T-cell (primary cell): ENCODE measurements at regions of chr19 and their contacts with region 1.

Region 1: DNA sequence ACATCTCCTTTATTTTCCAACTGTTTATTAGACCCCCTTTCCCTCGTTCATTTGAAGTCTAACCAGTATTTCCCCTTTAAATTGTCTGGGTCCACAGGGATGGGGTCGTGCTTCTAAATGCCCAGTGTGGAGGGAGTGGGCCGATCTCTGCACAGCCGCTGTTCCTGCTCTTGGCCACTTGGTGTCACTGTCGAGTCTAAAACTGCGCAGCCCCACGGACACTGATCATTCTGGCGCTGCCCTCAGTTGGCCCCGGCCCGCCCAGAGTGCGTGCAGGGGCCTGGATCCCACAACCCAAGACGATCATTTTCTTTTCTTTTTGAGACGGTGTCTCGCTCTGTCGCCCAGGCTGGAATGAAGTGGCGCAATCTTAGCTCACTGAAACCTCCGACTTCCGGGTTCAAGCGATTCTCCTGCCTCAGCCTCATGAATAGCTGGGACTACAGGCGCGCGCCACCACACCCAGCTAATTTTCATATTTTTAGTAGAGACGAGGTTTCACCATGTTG is 12.0 kb downstream of the WDR88 start:
- DNase-seq: peak in 34 of 35 experiments; percentile 4 to 82 (median 43)
- ATAC-seq: peak; percentile 94 to 99 (median 96)
- H3K4me3 ChIP-seq: no peak overlapping the region
- H3K4me3 Mint-ChIP-seq: peak overlapping the region in 2 of 3 donors; percentile 4 to 45
- H3K27ac ChIP-seq: no peak overlapping the region
- H3K27ac Mint-ChIP-seq: no peak overlapping the region
- H3K4me1 ChIP-seq: peaks cover 0 to 8% of the 10 kb centered on the region in 2 experiments
- H3K4me1 Mint-ChIP-seq: peaks cover 4 to 6% (median 4%) of the 10 kb centered on the region in 3 donors
- H3K27me3 ChIP-seq: peaks cover 0 to 19% of the 10 kb centered on the region in 2 experiments
- H3K27me3 Mint-ChIP-seq: peaks cover 0 to 12% of the 10 kb centered on the region in 2 donors

Region 2: GRCh38 chr19:33110137-33110910 is 33.6 kb before region 1 on chr19:
- CTCF ChIA-PET with region 1: no interaction called
- POLR2A ChIA-PET with region 1: no interaction called
- DNase-seq: no peak
- ATAC-seq: no peak
- H3K4me3 ChIP-seq: no peak overlapping the region
- H3K4me3 Mint-ChIP-seq: no peak overlapping the region
- H3K27ac ChIP-seq: no peak overlapping the region
- H3K27ac Mint-ChIP-seq: no peak overlapping the region
- H3K4me1 ChIP-seq: no peaks in the 10 kb centered on the region
- H3K4me1 Mint-ChIP-seq: no peaks in the 10 kb centered on the region
- H3K27me3 ChIP-seq: no peaks in the 10 kb centered on the region
- H3K27me3 Mint-ChIP-seq: no peaks in the 10 kb centered on the region

Region 3: DNA sequence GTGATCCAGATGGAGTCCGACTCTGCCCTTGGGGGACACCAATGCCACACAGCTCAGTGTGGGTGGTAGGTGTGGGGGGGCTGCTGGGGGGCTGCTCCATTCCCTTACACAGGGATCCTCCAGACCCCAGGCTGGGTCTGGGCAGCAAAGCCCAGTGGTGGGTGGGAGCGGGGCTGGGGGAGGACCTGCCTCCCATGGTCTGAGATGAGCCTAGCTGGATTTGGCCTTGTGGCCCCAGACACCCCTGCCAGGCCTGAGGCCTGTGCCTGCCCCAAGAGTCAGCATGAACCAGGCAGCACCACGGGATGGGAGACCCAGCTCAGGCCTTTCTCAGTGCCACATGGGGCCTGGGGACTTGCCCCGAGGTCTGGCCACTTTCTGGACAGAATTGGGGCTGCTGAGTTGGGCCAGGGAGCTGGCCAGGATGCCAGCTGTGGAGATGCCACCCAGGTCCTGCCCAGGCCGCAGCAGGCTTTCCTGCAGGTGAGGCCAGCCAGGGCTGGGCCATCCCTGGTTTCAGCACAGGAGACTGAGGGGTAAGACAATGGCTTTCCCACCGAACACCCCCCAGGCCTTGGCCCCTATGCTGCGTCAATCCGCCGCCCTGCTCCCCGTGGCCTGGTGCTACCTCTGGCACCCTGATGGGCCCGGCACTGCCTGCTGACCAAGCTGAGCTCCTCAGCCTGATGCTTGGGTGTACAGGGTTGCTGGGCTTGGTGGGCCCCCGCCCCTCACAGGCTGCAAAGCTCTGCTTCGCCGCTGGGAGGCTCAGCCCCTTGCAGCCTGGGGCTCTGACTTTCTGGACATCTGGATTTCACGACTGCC is 253.8 kb after region 1 on chr19:
- CTCF ChIA-PET with region 1: no interaction called
- POLR2A ChIA-PET with region 1: interaction called in 1 of 2 experiments, 13 read pairs
- DNase-seq: peak in 1 of 35 experiments; percentile 0
- ATAC-seq: no peak
- H3K4me3 ChIP-seq: no peak overlapping the region
- H3K4me3 Mint-ChIP-seq: no peak overlapping the region
- H3K27ac ChIP-seq: no peak overlapping the region
- H3K27ac Mint-ChIP-seq: no peak overlapping the region
- H3K4me1 ChIP-seq: no peaks in the 10 kb centered on the region
- H3K4me1 Mint-ChIP-seq: no peaks in the 10 kb centered on the region
- H3K27me3 ChIP-seq: no peaks in the 10 kb centered on the region
- H3K27me3 Mint-ChIP-seq: no peaks in the 10 kb centered on the region